PC-9 (cell line): ENCODE measurements at regions of chr6 and their contacts with region 1.

Region 1: DNA sequence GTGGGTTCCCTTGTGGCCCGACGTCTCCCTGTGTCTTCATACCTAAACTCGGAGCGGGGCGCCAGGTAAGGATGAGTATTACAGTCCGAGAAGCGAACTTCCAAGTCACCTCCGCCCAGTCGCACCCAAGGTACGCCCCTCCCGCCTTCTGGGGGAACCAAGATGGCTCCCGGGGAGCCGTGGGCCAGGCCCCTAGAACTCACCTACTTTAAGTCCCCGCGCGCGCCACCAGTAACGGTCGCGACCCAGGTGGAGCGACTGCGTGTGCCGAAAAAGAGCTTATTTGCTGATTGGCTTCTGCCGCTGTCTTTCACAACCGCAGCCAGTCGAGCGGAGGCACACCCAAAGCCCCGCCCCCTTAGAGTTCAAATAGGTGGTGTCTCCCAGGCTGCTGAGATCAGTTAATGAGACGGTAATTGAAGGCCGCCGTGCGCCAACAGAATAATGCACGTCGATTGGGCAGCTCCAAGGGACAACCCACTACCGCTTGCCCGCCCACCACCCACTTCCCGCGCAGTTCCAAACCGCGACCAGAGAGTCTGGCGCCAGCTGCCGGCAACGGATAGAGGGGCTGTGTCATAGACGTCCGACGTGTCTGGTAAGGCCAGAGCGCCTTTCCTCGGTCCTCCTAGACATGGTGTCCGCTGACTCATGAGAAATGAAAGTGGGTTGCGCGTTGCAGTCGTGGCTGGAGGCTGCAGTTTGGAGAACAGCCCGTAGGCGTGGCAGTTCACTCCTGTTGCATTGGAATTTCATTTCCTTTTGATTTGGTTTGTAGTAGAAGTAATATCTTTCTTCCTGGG is at the start of gene MDC1:
- DNase-seq: peak; percentile 99 to 100
- H3K4me3 ChIP-seq: peak within 1 kb of the TSS; percentile 85
- H3K27ac ChIP-seq: peak within 1 kb of the TSS; percentile 82
- H3K4me1 ChIP-seq: peaks cover 32% of the 10 kb centered on the region
- H3K27me3 ChIP-seq: no peaks in the 10 kb centered on the region
- CTCF ChIP-seq: no peak
- total RNA-seq, gene MDC1: 72.9 and 81.6 TPM in 2 replicates

Region 2: GRCh38 chr6:30344868-30345671 is 372.2 kb before region 1 on chr6 and contains the start of gene RPP21:
- CTCF ChIA-PET with region 1: no interaction called
- POLR2A ChIA-PET with region 1: no interaction called
- intact Hi-C with region 1: loop called (anchors 5 kb)
- DNase-seq: peak; percentile 66 to 90
- H3K4me3 ChIP-seq: peak within 1 kb of the TSS; percentile 90
- H3K27ac ChIP-seq: peak within 1 kb of the TSS; percentile 55
- H3K4me1 ChIP-seq: peaks cover 6% of the 10 kb centered on the region
- H3K27me3 ChIP-seq: no peaks in the 10 kb centered on the region
- CTCF ChIP-seq: no peak
- total RNA-seq, gene RPP21: 58.9 and 72.5 TPM in 2 replicates

Region 3: DNA sequence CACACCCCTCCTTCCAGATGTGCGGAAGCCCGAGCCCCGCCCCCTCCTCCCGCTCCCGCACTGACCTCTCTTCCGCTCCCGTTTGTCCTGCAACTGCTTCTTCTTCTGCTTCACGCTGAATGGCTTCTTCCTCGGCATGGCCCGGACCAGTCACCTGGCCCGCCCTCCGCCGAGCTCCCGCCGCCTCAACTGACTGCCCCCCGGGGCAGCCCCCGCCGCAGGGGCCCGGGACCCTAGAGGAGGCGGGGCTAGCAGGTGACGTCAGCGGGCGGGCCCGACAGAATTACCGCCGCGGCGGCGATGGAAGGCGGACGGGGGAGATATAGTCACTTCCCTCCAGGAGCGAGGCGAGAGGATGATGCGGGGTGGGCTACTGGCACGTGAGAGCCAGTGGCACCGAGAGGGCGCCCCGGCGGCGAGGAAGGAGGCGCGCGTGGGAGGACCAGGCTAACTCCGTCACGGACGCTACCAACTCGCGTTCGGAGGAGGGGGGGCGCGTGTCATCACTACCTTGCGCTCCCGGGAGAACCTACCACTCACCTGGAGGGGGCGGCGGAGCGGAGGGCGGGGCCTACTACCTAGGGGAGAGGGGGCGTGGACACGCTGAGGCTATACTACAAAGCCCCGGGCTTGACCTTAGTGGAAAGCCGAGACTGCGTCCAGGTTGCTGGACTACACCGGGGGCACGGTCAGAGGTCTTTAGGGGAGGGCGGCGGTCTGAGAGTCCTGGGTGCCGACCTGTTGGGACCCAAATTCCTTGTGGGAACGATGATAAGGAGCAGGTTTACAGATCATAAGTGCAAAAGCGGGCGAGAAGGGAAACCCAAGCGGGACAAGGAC is 161.0 kb before region 1 on chr6 and contains the start of gene GNL1:
- CTCF ChIA-PET with region 1: no interaction called
- POLR2A ChIA-PET with region 1: no interaction called
- intact Hi-C with region 1: loop called (anchors 1 kb)
- DNase-seq: peak; percentile 89 to 99
- H3K4me3 ChIP-seq: peak within 1 kb of the TSS; percentile 99
- H3K27ac ChIP-seq: peak within 1 kb of the TSS; percentile 79
- H3K4me1 ChIP-seq: peaks cover 17% of the 10 kb centered on the region
- H3K27me3 ChIP-seq: no peaks in the 10 kb centered on the region
- CTCF ChIP-seq: no peak
- total RNA-seq, gene GNL1: 114 and 123 TPM in 2 replicates

Region 4: DNA sequence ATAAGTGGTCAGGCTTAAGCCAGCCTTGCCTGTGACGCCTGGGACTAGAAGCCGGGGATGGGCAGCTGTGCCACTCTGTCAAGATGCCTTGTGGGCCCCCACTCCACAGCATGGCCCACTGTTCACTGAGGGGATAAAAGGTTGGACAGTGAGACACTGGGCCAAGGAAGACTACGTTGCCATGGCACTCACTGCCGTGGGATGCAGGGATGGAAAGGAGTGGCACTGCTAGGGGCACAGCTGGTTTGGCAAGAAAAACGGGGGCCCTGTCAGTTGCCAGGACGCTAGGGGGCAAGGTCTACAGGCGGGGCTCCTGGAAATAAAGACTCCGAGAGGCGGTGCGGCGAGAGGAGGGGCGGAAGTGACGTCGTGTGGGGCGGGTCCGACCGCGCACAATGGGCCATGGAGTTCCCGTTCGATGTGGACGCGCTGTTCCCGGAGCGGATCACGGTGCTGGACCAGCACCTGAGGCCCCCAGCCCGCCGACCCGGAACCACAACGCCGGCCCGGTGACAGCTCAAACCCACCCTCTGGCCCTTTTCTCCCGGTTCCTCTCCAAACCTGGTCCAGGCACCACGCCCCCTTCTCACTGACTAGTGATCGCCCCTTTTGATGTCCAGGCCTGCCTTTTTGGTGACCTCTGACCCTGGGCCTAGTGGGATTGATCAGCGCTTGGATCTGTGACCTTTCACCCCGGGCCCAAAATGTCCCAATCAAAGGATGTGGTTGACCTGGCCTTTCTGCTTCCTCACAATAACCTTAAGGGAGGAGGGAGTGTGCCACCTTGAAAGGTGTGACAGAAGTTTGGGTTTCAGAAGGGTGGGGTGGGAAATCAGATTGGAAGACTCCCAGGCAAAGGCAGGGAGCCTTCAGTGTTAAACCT is 90.5 kb before region 1 on chr6 and contains the start of gene ATAT1:
- CTCF ChIA-PET with region 1: interaction called, 3 read pairs
- POLR2A ChIA-PET with region 1: no interaction called
- intact Hi-C with region 1: loop called (anchors 1 kb)
- DNase-seq: peak; percentile 75 to 90
- H3K4me3 ChIP-seq: peak within 1 kb of the TSS; percentile 86
- H3K27ac ChIP-seq: peak within 1 kb of the TSS; percentile 66
- H3K4me1 ChIP-seq: no peaks in the 10 kb centered on the region; the same call in 1 of the 2 replicates
- H3K27me3 ChIP-seq: no peaks in the 10 kb centered on the region
- CTCF ChIP-seq: no peak; the same call in 1 of the 2 replicates
- total RNA-seq, gene ATAT1: 15.1 and 29.4 TPM in 2 replicates

Region 5: DNA sequence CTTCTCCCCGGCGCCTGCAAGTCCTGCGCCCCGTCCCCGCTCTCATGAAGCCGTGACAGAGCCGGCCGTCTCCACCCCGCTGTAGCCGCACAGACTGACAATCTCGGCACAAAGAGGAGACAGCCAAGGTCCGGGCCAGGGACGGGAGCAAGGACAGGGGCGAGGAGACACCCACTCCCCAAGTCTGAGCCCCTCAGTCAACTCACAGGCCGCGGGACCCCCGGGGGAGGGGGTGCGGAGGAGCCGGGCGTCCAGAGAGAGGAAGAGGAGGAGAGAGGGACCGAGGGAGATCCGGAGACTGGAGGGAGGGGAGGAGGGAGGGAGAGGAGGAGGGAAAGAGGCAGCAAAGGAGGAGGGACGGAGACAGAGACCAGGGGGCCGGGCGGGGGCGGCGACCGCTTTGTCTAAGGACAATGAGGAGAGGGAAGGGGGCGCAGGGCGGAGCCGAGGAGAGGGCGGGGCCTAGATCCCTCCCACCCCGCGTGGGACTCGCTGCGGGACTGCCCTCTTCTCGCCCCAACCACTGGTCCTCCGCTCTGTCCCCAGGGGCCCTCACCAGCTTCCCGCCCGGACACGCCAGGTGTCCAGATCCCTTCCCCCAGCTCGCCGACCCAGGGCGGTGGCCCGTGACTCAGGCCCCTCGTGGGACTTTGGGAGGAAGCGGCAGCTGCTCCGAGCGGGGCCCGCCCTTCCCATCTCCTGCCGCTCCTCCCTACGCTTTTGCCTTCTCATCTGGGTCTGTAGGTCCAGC is 30.2 kb before region 1 on chr6:
- CTCF ChIA-PET with region 1: interaction called, 3 read pairs
- POLR2A ChIA-PET with region 1: interaction called, 6 read pairs
- intact Hi-C with region 1: loop called (anchors 1 kb)
- DNase-seq: peak; percentile 80 to 98
- H3K4me3 ChIP-seq: peak overlapping the region; percentile 98
- H3K27ac ChIP-seq: peak overlapping the region; percentile 72
- H3K4me1 ChIP-seq: peaks cover 59% of the 10 kb centered on the region
- H3K27me3 ChIP-seq: no peaks in the 10 kb centered on the region
- CTCF ChIP-seq: no peak

Region 6: DNA sequence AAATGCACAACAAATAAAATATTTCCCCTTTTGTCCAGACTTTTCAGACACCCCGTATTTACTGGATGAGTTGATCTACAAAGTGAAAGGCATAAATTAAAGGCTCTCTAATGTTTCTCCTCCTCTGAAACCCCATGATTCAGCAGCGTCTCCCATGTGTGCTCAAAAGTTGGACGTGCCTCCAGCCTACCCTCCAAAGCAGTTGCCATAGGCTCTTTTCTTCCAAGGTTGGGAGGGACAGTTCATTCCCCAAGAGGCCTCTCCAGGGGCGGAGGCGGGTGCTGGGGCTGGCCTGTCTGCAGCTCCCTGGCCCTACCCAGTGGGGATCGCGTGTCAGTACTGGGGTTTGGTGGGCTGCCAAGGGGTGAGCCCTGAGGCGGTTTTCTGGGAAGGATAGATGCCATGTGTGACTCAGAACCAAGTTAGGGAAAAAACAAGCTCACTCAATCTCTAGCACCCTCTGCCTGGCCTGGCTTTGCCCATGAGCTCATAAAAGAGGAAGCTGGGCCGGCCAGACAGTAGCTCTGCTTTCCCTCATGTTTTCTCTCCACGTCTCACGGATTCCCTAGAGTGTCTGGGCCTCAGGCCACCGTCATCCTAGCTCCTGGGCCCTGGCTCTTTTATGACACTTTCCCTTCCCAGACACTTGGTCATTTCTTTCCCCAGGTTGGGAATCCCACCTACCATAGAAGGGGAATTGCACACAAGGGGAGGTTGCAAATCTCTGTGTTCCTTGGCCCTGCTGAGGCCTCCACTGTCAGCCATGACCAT is 35.1 kb after region 1 on chr6:
- CTCF ChIA-PET with region 1: no interaction called
- POLR2A ChIA-PET with region 1: interaction called, 18 read pairs
- intact Hi-C with region 1: no loop called
- DNase-seq: peak; percentile 98 to 100
- H3K4me3 ChIP-seq: no peak overlapping the region
- H3K27ac ChIP-seq: peak overlapping the region; percentile 100
- H3K4me1 ChIP-seq: peaks cover 70% of the 10 kb centered on the region
- H3K27me3 ChIP-seq: no peaks in the 10 kb centered on the region
- CTCF ChIP-seq: no peak

Region 7: GRCh38 chr6:30907758-30908591 is 190.7 kb after region 1 on chr6 and contains the start of gene GTF2H4:
- CTCF ChIA-PET with region 1: no interaction called
- POLR2A ChIA-PET with region 1: interaction called, 12 read pairs
- intact Hi-C with region 1: no loop called
- DNase-seq: peak; percentile 97 to 98
- H3K4me3 ChIP-seq: peak within 1 kb of the TSS; percentile 100
- H3K27ac ChIP-seq: peak within 1 kb of the TSS; percentile 43
- H3K4me1 ChIP-seq: peaks cover 7% of the 10 kb centered on the region
- H3K27me3 ChIP-seq: no peaks in the 10 kb centered on the region
- CTCF ChIP-seq: no peak
- total RNA-seq, gene GTF2H4: 31.3 and 43.9 TPM in 2 replicates